Panc1 (cell line): ENCODE measurements at regions of chr6 and their contacts with region 1.

Region 1: DNA sequence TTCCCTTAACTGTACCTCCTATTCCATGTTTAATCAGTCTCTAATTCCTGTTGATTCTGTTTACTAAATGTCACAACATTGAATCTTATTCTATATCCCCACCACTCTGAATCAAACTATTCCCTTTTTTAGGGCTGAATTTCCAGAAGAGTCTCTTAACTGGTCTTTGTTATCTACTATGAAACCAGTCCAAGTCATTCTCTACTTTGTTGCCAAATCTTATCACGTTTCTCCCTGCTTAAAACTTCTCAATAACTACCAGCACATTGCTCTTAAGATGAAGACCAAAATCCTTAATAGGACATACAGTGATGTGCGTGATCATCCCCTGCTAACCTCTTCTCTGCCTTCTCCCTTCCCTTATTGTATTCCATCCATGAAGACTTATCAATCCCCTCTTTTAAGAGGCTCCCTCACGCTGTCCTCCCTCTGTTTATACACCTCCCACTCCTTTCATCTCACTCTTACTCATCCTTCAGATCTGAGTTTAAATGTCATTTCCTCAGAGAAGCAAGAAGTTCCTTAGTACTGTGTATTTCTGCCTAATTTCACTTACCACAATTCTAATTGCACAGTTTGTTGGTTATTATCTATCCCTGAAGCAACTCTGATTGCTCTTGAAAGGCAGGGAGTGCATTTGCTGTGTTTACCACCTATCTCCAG is 143.0 kb upstream of the AHI1 start:
- DNase-seq: no peak
- ATAC-seq: no peak
- H3K4me3 ChIP-seq: no peak overlapping the region
- H3K27ac ChIP-seq: no peak overlapping the region
- H3K4me1 ChIP-seq: no peaks in the 10 kb centered on the region; the same call in 1 of the 2 replicates
- H3K27me3 ChIP-seq: no peaks in the 10 kb centered on the region
- CTCF ChIP-seq: no peak

Region 2: DNA sequence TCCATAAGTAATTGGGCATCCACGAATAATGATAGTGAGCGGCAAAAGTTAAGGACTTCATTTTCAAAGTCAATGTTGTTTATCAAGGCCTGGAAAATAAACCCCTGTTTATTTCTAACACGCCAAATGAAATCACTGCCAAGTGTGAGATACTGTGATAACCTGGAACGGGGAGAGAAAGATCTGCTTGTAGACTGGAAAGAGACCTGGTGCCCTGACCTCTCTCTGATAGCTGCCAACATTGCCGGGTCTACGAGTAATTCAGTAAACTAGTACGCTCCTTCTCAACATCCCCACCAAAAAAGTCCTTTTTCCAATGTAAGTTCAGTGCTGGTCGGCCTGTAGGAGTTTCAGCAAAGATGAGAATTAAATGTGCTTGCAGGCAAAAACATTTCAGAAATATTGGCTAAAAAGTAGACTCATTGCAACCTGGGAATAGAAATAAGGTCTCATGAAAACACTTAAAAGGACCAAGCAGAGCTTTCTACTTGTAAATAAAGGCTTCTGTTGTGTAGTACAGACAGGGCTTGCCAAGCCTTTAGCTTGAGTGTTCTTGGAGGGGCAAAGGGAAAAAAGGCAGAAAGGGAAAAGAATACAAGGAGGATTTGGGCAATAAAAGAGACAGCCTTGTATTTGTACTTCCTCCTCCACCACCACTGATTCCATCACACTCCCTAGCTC is 254.8 kb after region 1 on chr6:
- CTCF ChIA-PET with region 1: no interaction called
- POLR2A ChIA-PET with region 1: no interaction called
- in situ Hi-C with region 1: no loop called
- intact Hi-C with region 1: no loop called
- DNase-seq: no peak
- ATAC-seq: no peak
- H3K4me3 ChIP-seq: no peak overlapping the region
- H3K27ac ChIP-seq: no peak overlapping the region
- H3K4me1 ChIP-seq: no peaks in the 10 kb centered on the region
- H3K27me3 ChIP-seq: no peaks in the 10 kb centered on the region
- CTCF ChIP-seq: no peak

Region 3: GRCh38 chr6:137150072-137150471 is 1509.5 kb after region 1 on chr6:
- CTCF ChIA-PET with region 1: no interaction called
- POLR2A ChIA-PET with region 1: interaction called, 17 read pairs
- in situ Hi-C with region 1: no loop called
- intact Hi-C with region 1: no loop called
- DNase-seq: no peak
- ATAC-seq: no peak
- H3K4me3 ChIP-seq: no peak overlapping the region
- H3K27ac ChIP-seq: no peak overlapping the region
- H3K4me1 ChIP-seq: no peaks in the 10 kb centered on the region
- H3K27me3 ChIP-seq: no peaks in the 10 kb centered on the region
- CTCF ChIP-seq: no peak